HCT116 (cell line): ENCODE measurements at regions of chr10 and their contacts with region 1.

Region 1: DNA sequence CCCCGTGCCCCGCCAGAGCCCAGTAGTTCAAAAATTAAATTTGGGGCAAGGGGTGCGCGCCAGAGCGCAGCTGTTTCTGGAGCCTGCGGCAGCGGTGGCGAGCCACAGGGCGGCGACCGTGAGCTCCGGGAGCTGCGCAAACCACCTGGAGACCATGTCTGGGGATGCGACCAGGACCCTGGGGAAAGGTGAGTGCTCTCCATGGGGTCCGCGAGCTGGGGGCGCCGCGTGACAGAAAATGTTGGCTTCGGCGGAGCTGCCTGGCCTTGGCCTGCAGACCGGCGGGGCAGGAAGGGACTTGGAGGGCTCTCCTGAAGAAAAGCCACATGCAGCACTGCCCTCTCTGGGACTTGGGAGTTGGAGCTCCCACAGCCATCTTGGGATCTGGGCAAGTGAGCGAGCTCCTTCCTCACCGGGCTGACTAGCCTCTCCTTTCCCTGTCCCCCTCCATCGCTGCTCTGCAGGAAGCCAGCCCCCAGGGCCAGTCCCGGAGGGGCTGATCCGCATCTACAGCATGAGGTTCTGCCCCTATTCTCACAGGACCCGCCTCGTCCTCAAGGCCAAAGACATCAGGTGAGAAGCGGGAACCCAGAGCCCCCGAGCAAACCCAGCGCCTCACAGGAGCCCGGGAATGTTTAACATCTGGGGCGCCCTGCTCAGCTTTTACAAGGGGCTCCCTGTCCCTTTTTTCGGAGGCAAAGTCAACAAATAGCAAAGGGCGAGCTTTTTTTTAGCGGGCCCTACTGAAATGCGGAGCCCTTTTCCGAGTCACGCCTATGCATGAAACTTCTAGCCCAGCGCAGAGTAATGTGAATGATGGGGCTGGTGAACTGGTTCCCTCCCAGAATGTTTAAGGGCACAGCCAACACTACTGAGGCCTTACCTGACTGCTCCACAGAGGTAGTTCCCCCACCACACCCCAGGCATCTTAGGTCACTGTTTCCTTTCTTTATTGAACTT is 6.1 kb downstream of the GSTO2 start:
- DNase-seq: peak; percentile 68
- ATAC-seq: peak; percentile 94
- H3K4me3 ChIP-seq: peak overlapping the region; percentile 77 to 79
- H3K27ac ChIP-seq: peak overlapping the region; percentile 66
- H3K4me1 ChIP-seq: peaks cover 12 to 19% of the 10 kb centered on the region in 2 experiments
- H3K27me3 ChIP-seq: no peaks in the 10 kb centered on the region
- CTCF ChIP-seq: peak in 2 of 3 experiments; percentile 98 to 99; a peak in 4 of 6 replicates
- POLR2A ChIP-seq: peak; percentile 57
- RAD21 ChIP-seq: no peak

Region 2: GRCh38 chr10:103712570-103713498 is 562.2 kb before region 1 on chr10:
- CTCF ChIA-PET with region 1: interaction called, 22 read pairs
- POLR2A ChIA-PET with region 1: no interaction called
- RAD21 ChIA-PET with region 1: no interaction called
- intact Hi-C with region 1: no loop called
- DNase-seq: peak; percentile 75
- ATAC-seq: peak; percentile 75
- H3K4me3 ChIP-seq: no peak overlapping the region
- H3K27ac ChIP-seq: no peak overlapping the region
- H3K4me1 ChIP-seq: peaks cover 36 to 51% of the 10 kb centered on the region in 2 experiments
- H3K27me3 ChIP-seq: no peaks in the 10 kb centered on the region
- CTCF ChIP-seq: peak in 2 of 3 experiments; percentile 84 to 99; a peak in 4 of 6 replicates
- POLR2A ChIP-seq: no peak
- RAD21 ChIP-seq: no peak

Region 3: DNA sequence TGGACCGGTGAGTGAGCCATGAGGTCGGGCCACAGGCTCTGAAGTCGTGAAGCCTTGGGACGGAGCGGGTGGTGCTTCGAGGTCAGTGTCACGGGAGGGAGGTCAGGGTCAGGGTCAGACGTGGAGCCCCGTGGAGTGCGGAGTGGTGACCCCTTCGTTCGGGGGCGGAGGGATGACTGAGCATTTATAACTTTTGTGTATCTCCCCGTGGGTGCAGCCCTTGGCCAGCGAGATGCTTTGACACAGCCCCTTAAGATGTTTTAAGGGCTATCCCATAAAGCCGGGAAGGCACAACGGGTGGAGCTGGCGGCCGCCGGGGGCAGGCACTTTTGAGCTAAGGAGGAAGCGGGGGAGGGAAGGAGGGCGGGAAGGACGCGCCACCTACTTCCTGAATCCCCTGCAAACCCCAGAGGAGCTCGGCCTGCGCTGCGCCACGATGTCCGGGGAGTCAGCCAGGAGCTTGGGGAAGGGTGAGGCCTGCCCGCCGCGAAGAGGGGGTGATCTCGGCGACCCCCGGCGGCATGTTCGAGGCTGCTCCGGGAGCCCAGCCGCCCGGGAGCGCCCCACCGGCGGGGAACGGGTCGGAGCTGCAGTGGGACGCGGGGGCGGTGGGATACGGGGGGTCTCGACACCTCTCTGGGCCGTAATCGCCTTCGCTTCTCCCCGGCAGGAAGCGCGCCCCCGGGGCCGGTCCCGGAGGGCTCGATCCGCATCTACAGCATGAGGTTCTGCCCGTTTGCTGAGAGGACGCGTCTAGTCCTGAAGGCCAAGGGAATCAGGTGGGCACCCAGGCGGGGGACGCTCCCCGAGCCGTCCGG is 20.3 kb before region 1 on chr10 and contains the start of gene GSTO1:
- CTCF ChIA-PET with region 1: interaction called, 22 read pairs
- POLR2A ChIA-PET with region 1: interaction called, 3 read pairs
- RAD21 ChIA-PET with region 1: no interaction called
- intact Hi-C with region 1: no loop called
- DNase-seq: peak; percentile 51
- ATAC-seq: peak; percentile 93
- H3K4me3 ChIP-seq: peak within 1 kb of the TSS; percentile 68 to 73
- H3K27ac ChIP-seq: peak within 1 kb of the TSS; percentile 76
- H3K4me1 ChIP-seq: peaks cover 14 to 29% of the 10 kb centered on the region in 2 experiments
- H3K27me3 ChIP-seq: no peaks in the 10 kb centered on the region
- CTCF ChIP-seq: no peak
- POLR2A ChIP-seq: peak; percentile 79
- RAD21 ChIP-seq: no peak
- total RNA-seq, gene GSTO1: 179 TPM

Region 4: GRCh38 chr10:104308439-104308903 is 33.4 kb after region 1 on chr10:
- CTCF ChIA-PET with region 1: interaction called, 19 read pairs
- POLR2A ChIA-PET with region 1: no interaction called
- RAD21 ChIA-PET with region 1: interaction called in 1 of 2 experiments, 3 read pairs
- intact Hi-C with region 1: no loop called
- DNase-seq: no peak
- ATAC-seq: no peak
- H3K4me3 ChIP-seq: no peak overlapping the region
- H3K27ac ChIP-seq: no peak overlapping the region
- H3K4me1 ChIP-seq: peaks cover 0 to 5% of the 10 kb centered on the region in 2 experiments; a peak in 1 of 4 replicates
- H3K27me3 ChIP-seq: no peaks in the 10 kb centered on the region
- CTCF ChIP-seq: no peak
- POLR2A ChIP-seq: no peak
- RAD21 ChIP-seq: no peak

Region 5: DNA sequence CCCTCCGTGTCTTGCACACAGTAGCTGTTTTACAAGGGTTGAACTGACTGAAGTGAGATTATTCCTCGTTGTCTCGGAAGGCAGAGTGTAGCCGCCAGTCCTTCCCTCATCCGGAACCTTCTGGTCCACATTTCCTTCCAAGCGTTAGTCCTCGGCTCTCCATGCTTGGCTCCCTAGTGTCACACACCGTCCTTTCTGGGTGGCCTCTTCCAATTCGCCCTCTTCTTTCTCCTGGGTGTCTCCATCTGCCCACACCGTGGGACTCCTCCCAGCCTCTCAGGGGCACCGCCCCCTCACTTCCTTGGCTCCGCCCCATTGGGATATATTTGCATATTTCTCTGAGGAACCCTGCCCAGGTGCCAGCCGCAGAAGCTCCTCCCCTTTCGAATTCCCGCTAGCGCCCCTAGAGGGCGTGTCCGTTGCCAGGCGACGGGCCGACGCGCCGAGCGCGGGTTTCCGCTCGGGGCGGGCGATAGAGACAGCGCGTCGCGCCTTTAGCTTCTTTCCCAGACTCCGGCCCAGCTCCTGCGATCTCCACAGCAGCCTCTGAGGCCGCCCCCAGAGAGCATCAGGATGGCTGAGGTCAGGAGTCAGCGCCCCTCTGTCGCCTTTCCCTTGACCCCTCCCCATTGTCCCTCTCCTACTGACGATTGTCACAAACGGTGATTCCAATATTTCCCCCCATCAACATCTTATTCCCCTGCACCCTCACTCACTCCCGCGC is 78.4 kb after region 1 on chr10 and contains the start of gene CFAP58:
- CTCF ChIA-PET with region 1: interaction called, 106 read pairs
- POLR2A ChIA-PET with region 1: interaction called, 7 read pairs
- RAD21 ChIA-PET with region 1: no interaction called
- intact Hi-C with region 1: loop called (anchors 1 kb)
- DNase-seq: peak; percentile 89
- ATAC-seq: peak; percentile 97
- H3K4me3 ChIP-seq: peak within 1 kb of the TSS; percentile 20 to 38
- H3K27ac ChIP-seq: no peak within 1 kb of the TSS
- H3K4me1 ChIP-seq: peaks cover 7 to 33% of the 10 kb centered on the region in 2 experiments; a peak in 3 of 4 replicates
- H3K27me3 ChIP-seq: no peaks in the 10 kb centered on the region; the same call in 1 of the 2 replicates
- CTCF ChIP-seq: peak; percentile 41 to 83 (median 75); a peak in 4 of 6 replicates
- POLR2A ChIP-seq: no peak
- RAD21 ChIP-seq: peak; percentile 9; the same call in 1 of the 2 replicates
- total RNA-seq, gene CFAP58: 0.91 TPM

Region 6: GRCh38 chr10:104526188-104526587 is 251.1 kb after region 1 on chr10:
- CTCF ChIA-PET with region 1: no interaction called
- POLR2A ChIA-PET with region 1: no interaction called
- RAD21 ChIA-PET with region 1: no interaction called
- intact Hi-C with region 1: no loop called
- DNase-seq: no peak
- ATAC-seq: no peak
- H3K4me3 ChIP-seq: no peak overlapping the region
- H3K27ac ChIP-seq: no peak overlapping the region
- H3K4me1 ChIP-seq: no peaks in the 10 kb centered on the region
- H3K27me3 ChIP-seq: peaks cover 44% of the 10 kb centered on the region; the same call in 1 of the 2 replicates
- CTCF ChIP-seq: no peak
- POLR2A ChIP-seq: no peak
- RAD21 ChIP-seq: no peak